ENCODE measurements at regions of chr19 and their contacts with region 1.

Region 1: DNA sequence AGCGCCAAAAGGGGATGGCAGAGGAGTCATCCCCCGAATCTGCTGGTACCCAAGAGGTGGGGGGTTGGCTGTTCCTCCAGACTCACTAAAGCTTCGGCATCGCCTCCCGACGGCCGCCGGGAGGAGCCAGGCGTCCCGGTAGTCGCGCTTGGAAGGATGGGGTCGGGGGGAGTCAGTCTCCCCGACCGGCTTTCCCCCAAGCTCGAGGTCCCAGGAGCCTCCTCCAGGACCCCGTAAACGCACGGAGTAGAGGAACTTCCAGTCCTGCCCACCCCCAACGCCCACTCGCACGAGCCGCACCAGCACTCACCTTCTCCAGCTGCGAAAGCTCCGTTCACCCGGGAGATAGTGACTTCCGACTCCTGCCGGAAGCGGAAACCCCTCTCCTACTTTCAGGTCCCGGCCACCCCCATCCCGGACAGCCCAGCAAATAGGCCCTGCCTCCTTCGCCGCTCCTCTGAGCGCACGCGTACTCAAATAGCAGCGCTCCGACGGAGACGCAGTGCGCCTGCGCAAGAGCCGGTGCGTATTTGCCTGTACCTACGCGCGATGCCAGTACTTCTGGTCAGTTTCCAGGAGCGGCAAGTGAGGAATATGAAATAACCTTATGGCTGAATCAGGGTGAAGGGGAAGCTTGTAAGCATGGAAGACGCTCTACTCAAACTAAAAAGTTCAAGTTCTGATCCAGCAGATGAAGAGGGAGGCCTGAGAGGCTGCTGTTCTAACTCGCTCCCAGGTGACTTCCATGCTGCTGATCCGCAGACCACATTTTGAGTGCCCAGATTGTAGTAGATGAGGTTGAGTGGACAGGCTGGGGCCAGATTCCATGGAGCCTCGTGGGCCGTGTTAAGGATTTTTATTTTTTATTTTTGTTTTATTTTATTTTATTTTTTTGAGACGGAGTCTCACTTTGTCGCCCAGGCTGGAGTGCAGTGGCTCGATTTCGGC is at the start of gene ELOF1:
- DNase-seq: peak; percentile 90 to 98 (median 96)
- ATAC-seq: peak; percentile 92 to 93
- H3K4me3 Mint-ChIP-seq: peak within 1 kb of the TSS; percentile 92 to 100 (median 96)
- H3K27ac Mint-ChIP-seq: peak within 1 kb of the TSS; percentile 89 to 99 (median 96)
- H3K4me1 Mint-ChIP-seq: peaks cover 22 to 60% (median 54%) of the 10 kb centered on the region in 4 donors
- H3K27me3 Mint-ChIP-seq: no peaks in the 10 kb centered on the region
- polyA plus RNA-seq, gene ELOF1: 71.4 to 91.0 (median 90.6) TPM

Region 2: DNA sequence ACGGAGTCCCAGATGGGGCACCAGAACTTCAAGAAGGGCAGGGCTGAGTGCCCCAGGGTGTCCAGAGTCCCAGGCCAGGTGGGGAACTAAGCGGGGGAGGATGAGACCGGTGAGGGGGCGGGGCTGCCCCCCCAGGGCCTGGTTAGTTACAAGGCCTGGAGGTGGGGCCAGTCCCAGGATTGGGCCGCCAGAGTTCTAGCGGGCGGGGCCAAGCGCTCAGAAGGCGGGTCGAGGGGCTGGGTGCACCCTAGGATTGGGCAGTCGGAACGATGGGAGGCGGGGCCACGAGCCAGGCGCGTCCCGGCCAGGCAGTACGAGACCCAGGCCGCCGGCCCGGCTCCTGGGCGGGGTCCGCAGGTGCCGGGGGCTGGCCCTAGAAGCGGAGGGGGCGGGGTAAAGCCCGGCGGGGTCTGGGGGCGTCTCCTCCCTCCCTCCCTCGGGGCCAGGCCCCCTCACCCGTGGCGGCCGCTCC is 54.1 kb before region 1 on chr19:
- POLR2A ChIA-PET with region 1: no interaction called
- DNase-seq: peak; percentile 91 to 98 (median 96)
- ATAC-seq: peak; percentile 93
- H3K4me3 Mint-ChIP-seq: peak overlapping the region; percentile 78 to 96 (median 88)
- H3K27ac Mint-ChIP-seq: peak overlapping the region; percentile 34 to 98 (median 93)
- H3K4me1 Mint-ChIP-seq: peaks cover 9 to 15% (median 12%) of the 10 kb centered on the region in 4 donors
- H3K27me3 Mint-ChIP-seq: peaks cover 0 to 2% (median 0%) of the 10 kb centered on the region in 5 donors

Region 3: DNA sequence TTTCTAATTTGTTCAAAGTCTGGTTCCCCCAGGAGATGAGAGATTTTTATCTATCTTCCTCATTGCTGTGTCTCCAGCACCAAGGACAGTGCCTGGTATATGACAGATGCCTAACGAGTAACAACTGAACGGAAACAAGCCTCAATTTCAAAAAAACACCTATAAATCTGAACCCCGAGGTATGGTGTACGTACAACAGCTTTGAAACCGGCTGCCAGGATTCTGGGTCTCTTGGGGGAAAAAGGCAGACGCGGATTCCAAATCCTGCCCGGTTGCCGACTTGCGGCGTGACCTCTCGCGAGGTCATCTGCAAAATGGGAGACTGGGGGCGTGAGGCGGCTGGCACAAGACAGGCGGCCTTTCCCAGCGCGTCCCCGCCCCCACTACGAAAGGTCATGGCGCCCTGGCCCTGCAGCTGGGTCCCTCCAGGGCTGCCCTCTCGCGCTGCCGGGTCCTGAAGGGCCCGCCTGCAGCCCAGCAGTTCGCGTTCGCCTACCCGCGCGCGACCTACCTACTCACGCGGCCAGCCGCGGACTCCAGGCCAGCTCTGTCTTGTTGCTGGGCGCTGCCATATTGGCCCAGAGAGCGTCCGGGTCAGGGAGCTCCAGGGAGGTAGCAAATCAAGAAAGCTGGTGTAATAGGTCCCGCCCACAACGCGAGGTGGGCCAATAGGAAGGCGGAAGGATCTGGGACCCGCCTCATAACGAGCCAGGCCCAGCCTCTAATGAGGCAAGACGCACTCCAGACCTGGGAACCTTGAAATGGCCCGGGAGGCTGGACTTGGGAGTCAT is 30.4 kb before region 1 on chr19 and contains the start of gene ECSIT:
- POLR2A ChIA-PET with region 1: interaction called, 15 read pairs
- DNase-seq: peak; percentile 77 to 95 (median 90)
- ATAC-seq: peak; percentile 99
- H3K4me3 Mint-ChIP-seq: peak within 1 kb of the TSS; percentile 94 to 99 (median 98)
- H3K27ac Mint-ChIP-seq: peak within 1 kb of the TSS; percentile 87 to 98 (median 95)
- H3K4me1 Mint-ChIP-seq: peaks cover 10 to 29% (median 21%) of the 10 kb centered on the region in 4 donors
- H3K27me3 Mint-ChIP-seq: no peaks in the 10 kb centered on the region
- polyA plus RNA-seq, gene ECSIT: 34.3 to 40.1 (median 35.4) TPM

Region 4: DNA sequence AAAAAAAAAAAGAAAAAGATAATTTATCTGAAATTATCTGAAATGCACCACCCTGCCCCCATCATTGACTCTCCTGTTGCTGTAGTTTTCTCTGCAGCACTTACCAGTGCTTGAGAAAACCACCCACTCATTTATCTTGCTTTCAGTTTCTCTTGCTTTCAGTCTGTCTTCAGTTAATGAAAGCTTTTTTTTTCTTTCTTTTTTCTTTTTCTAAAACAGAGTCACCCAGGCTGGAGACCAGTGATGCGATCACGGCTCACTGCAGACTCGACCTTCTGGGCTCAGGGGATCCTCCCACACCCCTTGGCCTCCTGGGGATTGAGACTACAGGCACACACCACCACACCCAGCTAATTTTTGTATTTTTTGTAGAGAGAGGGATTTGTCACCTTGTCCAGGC is 22.6 kb after region 1 on chr19:
- POLR2A ChIA-PET with region 1: interaction called, 44 read pairs
- DNase-seq: peak in 7 of 10 donors; percentile 19 to 64 (median 31)
- ATAC-seq: peak; percentile 65 to 79
- H3K4me3 Mint-ChIP-seq: peak overlapping the region; percentile 59 to 83 (median 78)
- H3K27ac Mint-ChIP-seq: peak overlapping the region; percentile 84 to 99 (median 93)
- H3K4me1 Mint-ChIP-seq: peaks cover 14 to 57% (median 31%) of the 10 kb centered on the region in 4 donors
- H3K27me3 Mint-ChIP-seq: no peaks in the 10 kb centered on the region

Region 5: GRCh38 chr19:11685676-11686650 is 126.8 kb after region 1 on chr19:
- POLR2A ChIA-PET with region 1: no interaction called
- DNase-seq: no peak
- ATAC-seq: no peak
- H3K4me3 Mint-ChIP-seq: no peak overlapping the region
- H3K27ac Mint-ChIP-seq: no peak overlapping the region
- H3K4me1 Mint-ChIP-seq: peaks cover 0 to 4% (median 0%) of the 10 kb centered on the region in 4 donors
- H3K27me3 Mint-ChIP-seq: peaks cover 7 to 19% (median 9%) of the 10 kb centered on the region in 5 donors

Measured in naive thymus-derived CD8-positive, alpha-beta T cell (primary cell).